Activated CD8-positive, alpha-beta T cell treated with anti-CD3 and anti-CD28 coated beads for 36 hours (primary cell): ENCODE measurements at regions of chr14 and their contacts with region 1.

Region 1: DNA sequence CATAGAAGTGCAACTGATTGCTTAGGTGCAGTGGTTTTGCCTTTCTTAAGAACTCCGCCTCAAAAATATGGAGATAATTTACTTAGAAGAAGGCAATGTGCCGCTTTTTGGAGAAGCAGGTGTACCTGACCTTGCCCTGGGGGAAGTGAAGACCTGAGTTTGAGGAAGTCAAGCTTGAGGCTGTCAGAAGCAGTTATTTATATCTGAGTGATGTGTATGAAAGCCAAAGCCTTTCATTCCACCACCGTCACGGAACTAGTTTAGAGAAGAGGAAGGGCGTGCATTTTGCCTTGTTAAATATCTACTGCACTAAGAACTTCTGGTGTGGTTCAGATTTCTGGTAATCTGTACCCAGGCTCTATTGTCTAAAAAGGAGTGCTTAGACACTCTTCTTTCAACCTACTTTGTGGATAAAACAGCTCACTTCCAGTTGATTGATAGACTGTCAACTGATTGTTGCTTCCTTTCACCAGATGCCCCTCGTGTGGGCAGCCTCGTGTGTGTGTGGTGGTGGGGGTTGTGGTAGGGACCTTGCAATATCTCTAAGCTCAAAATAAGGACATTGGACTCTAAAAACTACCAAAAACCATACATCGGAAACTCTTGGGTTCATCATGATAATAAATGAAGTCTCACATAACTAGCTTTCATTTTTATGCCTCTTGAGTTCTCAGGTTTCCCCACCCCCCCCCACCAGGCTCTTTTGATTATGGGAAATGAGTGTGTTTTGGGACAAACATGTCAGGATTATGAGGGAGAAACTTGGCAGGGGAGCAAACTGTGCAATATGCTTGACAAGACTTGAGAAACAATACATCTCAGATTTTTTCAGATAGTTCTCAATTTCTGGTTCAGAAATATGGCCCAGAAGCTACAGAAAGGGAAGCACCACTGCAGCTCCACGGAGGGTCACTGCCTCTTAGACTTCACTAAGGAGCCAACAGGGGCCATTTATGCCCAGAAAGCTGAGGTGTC is 78.6 kb downstream of the ARF6 start:
- DNase-seq: peak; percentile 90
- ATAC-seq: peak; percentile 75
- H3K4me3 Mint-ChIP-seq: peak overlapping the region; percentile 69
- H3K27ac Mint-ChIP-seq: peak overlapping the region; percentile 94
- H3K4me1 Mint-ChIP-seq: peaks cover 56% of the 10 kb centered on the region
- H3K27me3 Mint-ChIP-seq: no peaks in the 10 kb centered on the region
- CTCF ChIP-seq: no peak

Region 2: GRCh38 chr14:49892636-49893308 is 78.7 kb before region 1 on chr14 and contains the start of gene ARF6:
- CTCF ChIA-PET with region 1: interaction called, 4 read pairs
- POLR2A ChIA-PET with region 1: interaction called, 30 read pairs
- intact Hi-C with region 1: no loop called
- DNase-seq: peak; percentile 98
- ATAC-seq: peak; percentile 80
- H3K4me3 Mint-ChIP-seq: peak within 1 kb of the TSS; percentile 88
- H3K27ac Mint-ChIP-seq: peak within 1 kb of the TSS; percentile 97
- H3K4me1 Mint-ChIP-seq: peaks cover 4% of the 10 kb centered on the region
- H3K27me3 Mint-ChIP-seq: no peaks in the 10 kb centered on the region
- CTCF ChIP-seq: no peak
- total RNA-seq, gene ARF6: 170 TPM

Region 3: GRCh38 chr14:49897968-49898367 is 73.5 kb before region 1 on chr14:
- CTCF ChIA-PET with region 1: interaction called, 8 read pairs
- POLR2A ChIA-PET with region 1: interaction called, 30 read pairs
- intact Hi-C with region 1: loop called (anchors 2 kb)
- DNase-seq: no peak
- ATAC-seq: no peak
- H3K4me3 Mint-ChIP-seq: peak overlapping the region; percentile 88
- H3K27ac Mint-ChIP-seq: peak overlapping the region; percentile 93
- H3K4me1 Mint-ChIP-seq: peaks cover 22% of the 10 kb centered on the region
- H3K27me3 Mint-ChIP-seq: no peaks in the 10 kb centered on the region
- CTCF ChIP-seq: no peak

Region 4: GRCh38 chr14:49946320-49947141 is 24.9 kb before region 1 on chr14:
- CTCF ChIA-PET with region 1: interaction called, 18 read pairs
- POLR2A ChIA-PET with region 1: interaction called, 31 read pairs
- intact Hi-C with region 1: no loop called
- DNase-seq: peak; percentile 50
- ATAC-seq: peak; percentile 43
- H3K4me3 Mint-ChIP-seq: peak overlapping the region; percentile 43
- H3K27ac Mint-ChIP-seq: peak overlapping the region; percentile 87
- H3K4me1 Mint-ChIP-seq: peaks cover 74% of the 10 kb centered on the region
- H3K27me3 Mint-ChIP-seq: no peaks in the 10 kb centered on the region
- CTCF ChIP-seq: no peak

Region 5: GRCh38 chr14:49992901-49993335 is 21.5 kb after region 1 on chr14:
- CTCF ChIA-PET with region 1: interaction called, 4 read pairs
- POLR2A ChIA-PET with region 1: interaction called, 135 read pairs
- intact Hi-C with region 1: loop called (anchors 2 kb)
- DNase-seq: peak; percentile 80
- ATAC-seq: peak; percentile 96
- H3K4me3 Mint-ChIP-seq: peak overlapping the region; percentile 56
- H3K27ac Mint-ChIP-seq: peak overlapping the region; percentile 81
- H3K4me1 Mint-ChIP-seq: peaks cover 26% of the 10 kb centered on the region
- H3K27me3 Mint-ChIP-seq: no peaks in the 10 kb centered on the region
- CTCF ChIP-seq: no peak